ENCODE measurements at regions of chr20 and their contacts with region 1.

Region 1: GRCh38 chr20:56343861-56344381 is 14.9 kb upstream of the FAM210B start:
- DNase-seq: peak in 1 of 2 donors; percentile 41
- ATAC-seq: peak in 5 of 8 donors; percentile 51 to 75 (median 66)
- H3K4me3 ChIP-seq: peak overlapping the region in 3 of 10 donors; percentile 4 to 22 (median 10)
- H3K27ac ChIP-seq: no peak overlapping the region
- H3K4me1 ChIP-seq: peaks cover 0 to 14% (median 6%) of the 10 kb centered on the region in 9 donors
- H3K27me3 ChIP-seq: peaks cover 0 to 73% (median 62%) of the 10 kb centered on the region in 7 donors
- CTCF ChIP-seq: peak in 8 of 9 donors; percentile 35 to 74 (median 66)

Region 2: GRCh38 chr20:54680872-54681619 is 1662.9 kb before region 1 on chr20:
- intact Hi-C with region 1: loop called in 2 of 10 experiments (anchors 5 to 10 kb)
- DNase-seq: no peak
- ATAC-seq: no peak
- H3K4me3 ChIP-seq: no peak overlapping the region
- H3K27ac ChIP-seq: no peak overlapping the region
- H3K4me1 ChIP-seq: peaks cover 0 to 7% (median 0%) of the 10 kb centered on the region in 9 donors
- H3K27me3 ChIP-seq: peaks cover 5 to 47% (median 35%) of the 10 kb centered on the region in 7 donors
- CTCF ChIP-seq: peak; percentile 41 to 75 (median 60)

Region 3: GRCh38 chr20:56195946-56196345 is 148.0 kb before region 1 on chr20:
- intact Hi-C with region 1: loop called in 1 of 10 experiments (anchors 10 kb)
- DNase-seq: no peak
- ATAC-seq: no peak
- H3K4me3 ChIP-seq: no peak overlapping the region
- H3K27ac ChIP-seq: no peak overlapping the region
- H3K4me1 ChIP-seq: no peaks in the 10 kb centered on the region
- H3K27me3 ChIP-seq: peaks cover 0 to 7% (median 0%) of the 10 kb centered on the region in 7 donors
- CTCF ChIP-seq: no peak

Region 4: GRCh38 chr20:56247948-56248782 is 95.8 kb before region 1 on chr20 and contains the start of gene MC3R:
- intact Hi-C with region 1: loop called in 1 of 10 experiments (anchors 5 kb)
- DNase-seq: peak; percentile 12 to 22
- ATAC-seq: peak in 1 of 8 donors; percentile 55
- H3K4me3 ChIP-seq: no peak within 1 kb of the TSS
- H3K27ac ChIP-seq: no peak within 1 kb of the TSS
- H3K4me1 ChIP-seq: no peaks in the 10 kb centered on the region
- H3K27me3 ChIP-seq: peaks cover 0 to 78% (median 56%) of the 10 kb centered on the region in 7 donors
- CTCF ChIP-seq: peak; percentile 22 to 68 (median 59)
- total RNA-seq, gene MC3R: not detected

Measured in heart right ventricle (tissue), 16 donors.